Kidney (tissue), 22 donors: ENCODE measurements at regions of chr10 and their contacts with region 1.

Region 1: DNA sequence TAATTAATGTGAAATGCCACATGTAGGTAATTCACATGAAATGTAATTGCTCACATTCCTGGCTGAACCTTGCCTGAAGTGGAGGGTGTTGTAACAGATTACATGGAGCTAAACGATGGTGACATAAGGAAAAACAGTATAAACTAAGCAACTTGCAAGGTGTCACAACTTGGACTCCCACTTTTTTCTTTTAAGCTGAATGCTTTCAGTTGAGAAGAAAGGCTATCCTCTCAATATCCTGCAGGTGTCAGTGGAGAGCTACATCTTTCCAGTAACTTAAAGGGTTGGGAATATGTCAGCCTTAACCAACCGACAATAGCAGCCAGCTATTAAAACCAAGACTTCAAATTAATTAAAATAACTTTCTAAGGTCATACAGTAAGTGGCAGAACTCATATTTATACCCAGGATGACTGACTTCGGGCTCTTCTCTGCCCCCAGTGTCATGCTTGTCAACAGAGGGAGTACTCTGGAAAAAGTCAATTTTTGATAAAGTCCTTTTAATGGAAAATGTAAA is 33.7 kb downstream of the NRBF2 start:
- DNase-seq: peak in 3 of 5 donors; percentile 41 to 95 (median 88)
- H3K4me3 ChIP-seq: no peak overlapping the region
- H3K27ac ChIP-seq: no peak overlapping the region
- H3K4me1 ChIP-seq: no peaks in the 10 kb centered on the region
- H3K27me3 ChIP-seq: no peaks in the 10 kb centered on the region
- CTCF ChIP-seq: peak; percentile 78

Region 2: GRCh38 chr10:63720072-63720537 is 553.3 kb after region 1 on chr10:
- intact Hi-C with region 1: loop called (anchors 10 kb)
- DNase-seq: peak in 4 of 5 donors; percentile 50 to 82 (median 72)
- H3K4me3 ChIP-seq: no peak overlapping the region
- H3K27ac ChIP-seq: no peak overlapping the region
- H3K4me1 ChIP-seq: peaks cover 7 to 32% (median 13%) of the 10 kb centered on the region in 3 donors
- H3K27me3 ChIP-seq: no peaks in the 10 kb centered on the region
- CTCF ChIP-seq: peak; percentile 96